ENCODE measurements at regions of chr4 and their contacts with region 1.

Region 1: DNA sequence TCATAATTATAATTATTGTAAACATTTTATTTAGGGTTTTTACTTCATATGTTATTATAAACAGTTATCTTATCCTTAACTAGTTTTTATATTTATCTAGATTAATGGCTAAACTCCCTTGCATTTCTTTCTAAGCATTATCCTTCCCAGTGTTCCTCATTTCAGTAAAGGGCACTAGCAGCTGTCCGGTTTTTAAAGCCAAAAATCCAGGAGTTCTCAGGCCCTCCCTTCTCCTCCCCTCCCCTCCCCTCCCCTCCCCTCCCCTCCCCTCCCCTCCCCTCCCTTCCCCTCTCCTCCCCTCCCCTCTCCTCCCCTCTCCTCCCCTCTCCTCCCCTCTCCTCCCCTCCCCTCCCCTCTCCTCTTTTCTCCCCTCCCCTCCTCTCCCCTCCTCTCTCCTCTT is 58.9 kb downstream of the FBXO8 start:
- DNase-seq: no peak
- H3K4me3 Mint-ChIP-seq: no peak overlapping the region
- H3K27ac Mint-ChIP-seq: no peak overlapping the region
- H3K4me1 Mint-ChIP-seq: no peaks in the 10 kb centered on the region
- H3K27me3 Mint-ChIP-seq: peaks cover 34% of the 10 kb centered on the region

Region 2: DNA sequence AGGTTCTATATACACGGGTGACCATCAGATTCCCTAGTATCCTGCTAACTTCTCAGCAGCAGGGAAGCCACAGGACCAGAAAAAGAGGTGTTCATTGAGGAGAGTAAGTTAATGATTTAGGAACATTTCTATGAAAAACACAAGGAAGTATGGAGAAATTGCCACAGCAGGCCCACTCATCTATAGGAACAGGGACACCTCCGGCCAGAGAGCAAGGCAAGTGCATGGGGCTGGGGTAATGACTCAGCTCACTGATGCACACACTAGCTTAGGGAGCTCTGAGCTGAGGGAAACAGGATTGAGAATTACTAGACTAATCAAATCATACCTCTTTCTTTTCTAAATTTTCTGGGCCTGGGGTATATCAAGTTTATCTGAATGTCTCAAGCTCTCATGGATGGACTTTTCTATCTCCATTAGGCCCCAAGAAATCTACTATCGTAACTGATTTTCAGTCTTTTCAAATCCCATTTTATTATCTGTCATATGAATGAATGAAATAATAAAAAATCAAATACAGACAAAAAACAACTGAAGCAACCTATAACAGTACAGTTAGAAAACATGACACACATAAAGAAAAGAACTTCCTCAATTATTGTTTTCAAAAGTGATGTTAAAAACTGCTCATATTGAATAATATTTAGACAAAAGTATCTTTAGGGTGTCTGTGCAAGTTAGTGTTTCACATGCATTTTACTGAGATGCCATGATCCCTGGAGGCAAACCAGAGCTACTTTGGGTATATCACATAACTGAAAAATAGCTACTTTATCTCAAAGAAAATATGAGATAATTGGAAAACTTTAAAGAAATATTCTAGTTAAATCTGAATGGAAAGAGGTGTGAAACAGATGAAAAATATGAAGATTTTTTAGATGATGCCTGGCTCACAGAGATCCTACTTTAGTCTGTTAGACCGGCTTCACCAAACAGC is 30.8 kb before region 1 on chr4:
- CTCF ChIA-PET with region 1: no interaction called
- DNase-seq: no peak
- H3K4me3 Mint-ChIP-seq: no peak overlapping the region
- H3K27ac Mint-ChIP-seq: no peak overlapping the region
- H3K4me1 Mint-ChIP-seq: no peaks in the 10 kb centered on the region
- H3K27me3 Mint-ChIP-seq: peaks cover 17% of the 10 kb centered on the region

Region 3: GRCh38 chr4:174318829-174319764 is 94.5 kb after region 1 on chr4:
- CTCF ChIA-PET with region 1: interaction called, 12 read pairs
- DNase-seq: no peak
- H3K4me3 Mint-ChIP-seq: no peak overlapping the region
- H3K27ac Mint-ChIP-seq: no peak overlapping the region
- H3K4me1 Mint-ChIP-seq: no peaks in the 10 kb centered on the region
- H3K27me3 Mint-ChIP-seq: no peaks in the 10 kb centered on the region

Region 4: GRCh38 chr4:174461466-174462106 is 237.0 kb after region 1 on chr4:
- CTCF ChIA-PET with region 1: no interaction called
- DNase-seq: no peak
- H3K4me3 Mint-ChIP-seq: no peak overlapping the region
- H3K27ac Mint-ChIP-seq: no peak overlapping the region
- H3K4me1 Mint-ChIP-seq: no peaks in the 10 kb centered on the region
- H3K27me3 Mint-ChIP-seq: no peaks in the 10 kb centered on the region

Measured in activated naive CD4-positive, alpha-beta T cell treated with anti-CD3 and anti-CD28 coated beads, Interleukin-2, amount 10 ng/mL, durations not matched to agents 7 days and 5 days (primary cell).